ENCODE measurements at regions of chr9 and their contacts with region 1.

Region 1: GRCh38 chr9:3467593-3468219 is 58.1 kb downstream of the RFX3 start:
- DNase-seq: no peak

Region 2: DNA sequence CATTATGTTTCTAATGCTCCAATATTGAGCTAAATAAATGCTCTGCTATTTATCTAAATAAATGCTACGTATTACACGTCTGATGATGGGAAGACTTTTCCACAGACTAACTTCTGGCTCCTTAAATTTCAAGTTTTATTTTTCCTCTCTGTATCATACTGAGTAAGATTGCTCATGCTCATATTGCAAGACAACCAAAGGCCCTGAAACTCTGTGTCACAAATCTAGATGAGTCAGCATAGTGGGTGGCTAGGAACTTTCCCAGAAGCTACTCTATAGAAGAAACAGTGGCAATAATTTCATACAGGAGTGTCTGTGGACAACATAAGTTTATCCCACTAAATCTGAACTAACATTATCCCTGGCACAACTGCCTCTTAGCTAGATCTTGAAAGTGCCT is 111.1 kb after region 1 on chr9:
- intact Hi-C with region 1: no loop called
- DNase-seq: no peak

Region 3: DNA sequence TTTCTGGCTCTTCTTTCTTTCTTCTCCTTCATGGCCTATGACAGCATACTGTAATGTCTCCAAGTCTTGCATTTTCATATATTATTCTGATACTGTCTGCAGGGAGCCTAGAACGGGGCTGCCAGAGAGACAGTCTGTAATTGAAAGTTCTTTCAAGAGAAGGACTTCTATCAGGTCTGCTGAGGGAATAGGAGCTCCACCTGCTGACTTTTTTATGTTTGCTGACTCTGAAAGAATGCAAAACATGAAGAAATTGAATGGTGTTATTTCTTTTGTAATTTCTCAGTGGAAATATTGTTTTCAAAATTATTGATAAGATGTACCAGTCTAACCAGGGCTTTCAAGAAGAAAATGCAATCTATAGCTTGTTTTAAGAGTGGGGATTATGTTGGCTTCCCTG is 179.9 kb after region 1 on chr9:
- intact Hi-C with region 1: loop called (anchors 10 kb)
- DNase-seq: no peak

Measured in cardiac septum (tissue), 1 donor.